Transverse colon (tissue), 4 donors: ENCODE measurements at regions of chr9 and their contacts with region 1.

Region 1: DNA sequence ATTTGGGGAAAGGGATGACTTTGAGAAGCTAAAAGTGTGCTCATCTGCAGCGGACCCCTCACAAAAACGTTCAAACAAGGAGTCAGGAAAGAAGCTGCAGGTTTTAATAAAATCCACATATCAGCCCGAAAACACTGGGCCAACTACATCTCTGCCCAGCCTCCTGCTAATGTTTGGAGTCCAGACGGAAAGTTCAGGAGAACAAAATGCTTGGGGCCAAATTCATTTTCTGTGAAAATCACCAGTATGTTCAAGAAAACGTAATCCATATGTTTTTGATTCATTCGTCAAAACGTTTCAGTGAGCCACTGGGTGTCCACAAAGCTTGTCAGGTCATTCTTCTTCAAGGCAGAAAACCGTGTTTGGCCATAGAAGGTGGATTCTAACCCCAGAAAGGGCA is 87.5 kb upstream of the GAS1 start:
- DNase-seq: no peak
- H3K4me3 ChIP-seq: no peak overlapping the region
- H3K27ac ChIP-seq: peak overlapping the region; percentile 51 to 79 (median 70)
- H3K4me1 ChIP-seq: peaks cover 0 to 10% (median 4%) of the 10 kb centered on the region in 4 donors
- H3K27me3 ChIP-seq: no peaks in the 10 kb centered on the region
- CTCF ChIP-seq: no peak
- EP300 ChIP-seq: no peak
- POLR2A ChIP-seq: no peak

Region 2: DNA sequence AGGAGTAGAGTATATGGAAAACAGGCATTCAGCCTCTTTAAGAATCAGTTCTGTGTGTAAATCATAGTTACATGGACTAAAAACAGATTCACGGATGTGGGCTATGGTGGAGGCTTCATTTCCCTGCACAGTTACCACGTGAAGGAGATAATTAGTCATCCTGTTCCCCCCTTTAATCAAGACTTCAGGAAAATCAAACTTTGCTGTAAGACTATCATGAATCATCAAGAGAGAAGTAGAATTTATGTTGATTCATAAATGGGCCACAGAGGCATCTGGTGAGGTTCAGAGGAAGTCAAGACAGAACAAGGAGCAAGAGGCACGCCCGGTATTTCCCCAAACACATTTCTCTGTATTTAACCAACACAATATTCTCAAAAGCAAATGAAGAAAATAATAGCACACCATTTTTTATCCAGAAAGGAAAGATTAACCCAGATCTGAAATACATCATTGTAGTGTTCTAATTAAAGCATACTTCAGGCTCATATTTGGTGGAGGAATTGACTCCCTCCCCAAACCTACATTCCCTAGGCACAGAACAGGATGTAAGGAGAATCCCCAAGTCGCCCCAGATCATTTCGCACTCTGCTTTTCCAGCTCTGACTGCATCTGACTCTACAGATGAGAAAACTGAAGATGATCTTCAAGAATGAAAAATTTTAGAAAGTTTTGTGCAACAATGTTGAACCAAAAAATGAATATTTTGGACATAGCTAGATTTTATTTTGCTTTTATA is 88.3 kb after region 1 on chr9:
- in situ Hi-C with region 1: no loop called
- intact Hi-C with region 1: loop called (anchors 5 kb)
- DNase-seq: no peak
- H3K4me3 ChIP-seq: no peak overlapping the region
- H3K27ac ChIP-seq: peak overlapping the region; percentile 12 to 71 (median 54)
- H3K4me1 ChIP-seq: peaks cover 0 to 18% (median 3%) of the 10 kb centered on the region in 4 donors
- H3K27me3 ChIP-seq: no peaks in the 10 kb centered on the region
- CTCF ChIP-seq: no peak
- EP300 ChIP-seq: no peak
- POLR2A ChIP-seq: no peak

Region 3: DNA sequence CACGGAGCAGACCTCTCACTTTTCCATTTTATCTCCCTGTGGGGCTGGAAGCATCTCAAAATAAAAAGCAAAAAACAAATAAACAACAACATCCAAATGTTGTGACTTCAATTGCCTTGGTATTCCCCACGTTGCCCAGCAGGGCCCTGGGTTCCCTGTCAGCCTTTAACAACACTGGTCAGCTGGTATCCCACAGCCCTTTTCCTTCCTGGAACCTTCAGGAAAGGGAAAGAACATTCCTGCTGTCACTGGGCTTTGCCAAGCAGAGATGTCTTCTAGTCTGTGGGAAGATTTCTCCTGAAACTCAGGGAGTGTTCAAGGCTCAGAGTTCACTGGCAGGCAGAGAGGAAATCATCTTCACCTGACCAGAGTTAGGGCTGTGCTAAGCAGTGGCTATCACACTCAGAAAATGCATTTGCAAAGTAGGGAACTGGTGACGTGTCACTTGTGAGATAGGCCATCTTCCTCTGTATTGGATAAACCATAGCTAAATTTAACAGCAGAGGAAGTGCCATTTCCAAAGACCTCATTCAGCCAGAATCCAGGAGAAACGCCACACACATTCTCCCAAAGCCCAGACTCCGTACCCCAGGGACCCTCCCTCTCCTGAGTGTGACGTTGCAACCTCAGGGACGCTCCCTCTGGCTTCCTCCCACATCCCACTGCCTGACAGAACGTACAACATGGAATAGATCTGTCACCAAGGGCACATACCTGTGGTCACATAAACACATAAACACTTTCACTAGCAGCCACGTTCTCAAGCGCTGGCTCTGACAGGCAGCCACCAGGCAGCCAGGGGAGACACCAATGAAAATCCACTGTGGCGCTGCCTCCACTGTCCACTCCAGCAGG is 188.8 kb after region 1 on chr9:
- in situ Hi-C with region 1: no loop called
- intact Hi-C with region 1: no loop called
- DNase-seq: no peak
- H3K4me3 ChIP-seq: no peak overlapping the region
- H3K27ac ChIP-seq: no peak overlapping the region
- H3K4me1 ChIP-seq: no peaks in the 10 kb centered on the region
- H3K27me3 ChIP-seq: no peaks in the 10 kb centered on the region
- CTCF ChIP-seq: no peak
- EP300 ChIP-seq: no peak
- POLR2A ChIP-seq: no peak